Common myeloid progenitor, CD34-positive (primary cell): ENCODE measurements at regions of chr16 and their contacts with region 1.

Region 1: DNA sequence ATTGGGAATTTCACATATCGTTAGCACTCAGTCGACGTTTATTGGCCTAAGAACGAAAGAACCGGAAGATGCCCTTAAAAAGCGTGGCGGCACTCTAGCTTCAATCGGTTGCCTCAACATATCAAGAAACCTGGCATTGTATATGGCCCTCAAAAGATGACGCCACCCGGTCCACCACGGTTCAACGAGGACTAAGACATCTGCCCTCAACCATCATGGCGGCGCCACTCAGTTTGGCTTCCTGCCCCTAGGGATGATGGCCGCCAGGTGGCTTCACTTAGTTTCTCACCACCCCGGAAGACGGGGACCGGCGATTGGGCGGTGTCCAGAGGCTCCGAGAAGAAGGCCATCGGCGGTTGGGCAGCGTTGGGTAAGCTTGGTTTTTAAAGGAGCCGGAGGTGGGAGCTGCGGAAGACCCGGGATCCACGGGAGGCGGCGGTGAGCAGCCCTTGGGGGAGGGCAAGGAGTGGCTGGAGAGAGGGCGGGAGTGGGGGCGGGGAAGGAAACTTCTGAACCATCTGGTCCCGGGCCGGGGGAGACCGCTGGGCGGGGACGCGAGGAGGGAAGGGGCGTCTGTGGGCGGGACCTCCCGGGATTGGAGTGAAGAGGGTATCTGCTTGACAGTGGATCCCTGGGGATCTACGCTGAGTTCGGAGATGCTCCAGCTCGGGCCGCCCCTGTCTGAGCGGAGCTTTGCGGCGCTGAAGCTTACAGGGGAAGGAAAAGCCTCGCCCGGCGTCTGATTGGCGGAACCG is at the start of gene PRR14:
- DNase-seq: peak; percentile 100
- H3K4me3 ChIP-seq: peak within 1 kb of the TSS; percentile 60 to 98 (median 90)
- H3K27ac ChIP-seq: peak within 1 kb of the TSS; percentile 94 to 95
- H3K4me1 ChIP-seq: peaks cover 6 to 43% (median 32%) of the 10 kb centered on the region in 4 experiments
- H3K27me3 ChIP-seq: no peaks in the 10 kb centered on the region

Region 2: DNA sequence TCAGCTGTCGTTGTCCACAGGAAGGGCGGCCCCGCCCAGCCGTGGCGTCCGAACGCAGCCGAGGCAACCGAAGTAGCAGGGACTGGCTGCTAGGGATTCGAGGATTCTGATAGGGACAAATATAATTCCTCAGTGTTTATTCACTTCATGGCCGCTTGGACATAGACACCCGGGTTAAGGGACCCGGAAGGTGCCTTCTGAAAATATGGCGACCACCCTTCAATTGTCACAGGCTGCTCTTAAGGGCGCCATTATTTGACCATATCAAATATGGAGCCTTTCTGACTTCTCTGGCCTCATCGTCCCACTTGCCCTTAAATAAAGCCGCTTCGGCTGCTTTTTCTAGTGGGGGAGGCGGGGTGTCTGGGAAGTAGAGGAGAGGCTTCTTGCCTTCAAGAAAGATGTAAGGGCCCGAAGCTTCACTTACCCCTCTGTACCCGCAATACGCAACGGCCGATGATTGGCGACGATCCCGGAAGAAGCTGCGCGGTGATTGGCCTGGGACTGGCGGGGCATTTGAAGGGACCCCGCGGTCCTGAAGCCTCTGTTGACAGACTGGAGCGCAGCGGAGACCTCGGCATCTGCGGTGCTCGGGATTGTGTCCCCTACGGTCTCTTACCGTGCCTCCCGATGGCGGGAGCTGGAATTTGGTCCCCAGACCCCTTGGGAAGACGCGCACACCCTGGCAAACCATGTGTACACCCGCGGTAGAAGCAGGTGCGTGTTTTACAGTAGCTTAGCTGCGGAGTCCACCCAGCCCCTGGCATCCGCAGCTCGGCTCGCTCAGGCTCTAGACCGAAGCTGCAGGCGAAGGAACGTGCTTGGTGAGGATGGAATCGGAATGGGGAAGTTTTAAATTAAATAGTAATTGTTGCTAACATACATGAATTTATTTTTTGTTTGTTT is 78.6 kb before region 1 on chr16 and contains the start of gene ZNF688:
- CTCF ChIA-PET with region 1: no interaction called
- POLR2A ChIA-PET with region 1: interaction called, 11 read pairs
- DNase-seq: peak; percentile 99 to 100 (median 99)
- H3K4me3 ChIP-seq: peak within 1 kb of the TSS; percentile 71 to 93 (median 86)
- H3K27ac ChIP-seq: peak within 1 kb of the TSS; percentile 90 to 94
- H3K4me1 ChIP-seq: peaks cover 7 to 56% (median 36%) of the 10 kb centered on the region in 4 experiments
- H3K27me3 ChIP-seq: no peaks in the 10 kb centered on the region

Region 3: DNA sequence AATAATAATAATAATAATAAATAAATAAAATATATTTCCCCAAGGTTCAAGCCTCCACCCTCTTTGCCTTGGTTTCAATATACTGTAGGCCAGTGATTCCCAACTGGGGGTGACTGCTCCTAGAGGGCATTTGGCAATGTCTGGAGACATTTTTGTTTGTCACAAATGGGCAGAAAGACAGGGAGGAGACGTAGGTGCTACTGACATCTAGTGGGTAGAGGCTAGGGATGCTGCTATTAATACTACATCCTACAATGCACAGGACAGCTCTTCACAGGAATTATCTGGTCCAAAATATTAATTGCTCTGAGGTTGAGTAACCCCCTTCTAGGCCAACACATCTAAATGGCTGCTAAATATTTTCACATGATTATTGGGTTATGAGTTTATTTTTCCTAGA is 12.6 kb before region 1 on chr16:
- CTCF ChIA-PET with region 1: interaction called, 15 read pairs
- POLR2A ChIA-PET with region 1: interaction called, 5 read pairs
- DNase-seq: peak; percentile 74 to 83 (median 83)
- H3K4me3 ChIP-seq: no peak overlapping the region
- H3K27ac ChIP-seq: no peak overlapping the region
- H3K4me1 ChIP-seq: peaks cover 0 to 13% (median 9%) of the 10 kb centered on the region in 4 experiments
- H3K27me3 ChIP-seq: no peaks in the 10 kb centered on the region

Region 4: GRCh38 chr16:30715737-30716445 is 65.3 kb after region 1 on chr16:
- CTCF ChIA-PET with region 1: no interaction called
- POLR2A ChIA-PET with region 1: no interaction called
- DNase-seq: peak in 2 of 3 donors; percentile 38 to 52
- H3K4me3 ChIP-seq: no peak overlapping the region
- H3K27ac ChIP-seq: no peak overlapping the region
- H3K4me1 ChIP-seq: no peaks in the 10 kb centered on the region
- H3K27me3 ChIP-seq: no peaks in the 10 kb centered on the region